MCF 10A (cell line): ENCODE measurements at regions of chr13 and their contacts with region 1.

Region 1: GRCh38 chr13:51645154-51645650 is 60.9 kb downstream of the WDFY2 start:
- DNase-seq: peak; percentile 78
- H3K4me3 Mint-ChIP-seq: peak overlapping the region; percentile 52
- H3K27ac Mint-ChIP-seq: peak overlapping the region; percentile 95
- H3K4me1 Mint-ChIP-seq: peaks cover 39% of the 10 kb centered on the region
- H3K27me3 Mint-ChIP-seq: no peaks in the 10 kb centered on the region
- CTCF ChIP-seq: no peak

Region 2: DNA sequence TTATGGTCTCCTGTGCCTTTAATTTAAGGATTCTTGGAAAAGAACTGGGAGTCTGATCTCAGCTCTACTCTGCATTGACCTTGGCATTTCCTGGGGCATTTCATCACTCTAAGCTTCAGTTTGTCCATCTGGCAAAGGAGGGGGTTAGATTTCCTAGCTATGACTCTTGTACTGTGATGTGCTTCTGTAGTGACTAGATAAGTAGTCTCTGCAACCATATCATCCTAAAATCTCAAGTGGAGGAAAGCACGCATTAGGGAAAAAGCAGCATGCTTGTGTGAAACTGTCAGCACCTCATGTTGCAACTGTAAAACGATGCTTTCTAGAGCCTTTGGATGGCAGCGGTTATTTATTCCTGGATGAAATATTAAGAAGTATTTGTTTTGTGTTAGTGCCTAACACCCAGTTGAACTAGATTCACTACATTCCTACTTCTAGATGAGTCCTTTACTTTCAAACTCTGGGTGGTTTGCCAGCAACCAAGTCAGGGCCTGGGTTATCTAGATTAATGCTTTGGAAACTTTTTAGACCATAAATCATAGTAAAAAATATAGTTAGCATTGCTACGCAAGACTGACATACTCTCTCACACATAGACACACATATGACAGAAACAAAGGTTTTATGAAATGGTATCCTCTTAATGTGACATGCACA is 54.1 kb before region 1 on chr13:
- CTCF ChIA-PET with region 1: no interaction called
- POLR2A ChIA-PET with region 1: interaction called, 14 read pairs
- intact Hi-C with region 1: no loop called
- DNase-seq: peak; percentile 91
- H3K4me3 Mint-ChIP-seq: peak overlapping the region; percentile 61
- H3K27ac Mint-ChIP-seq: peak overlapping the region; percentile 77
- H3K4me1 Mint-ChIP-seq: peaks cover 59% of the 10 kb centered on the region
- H3K27me3 Mint-ChIP-seq: no peaks in the 10 kb centered on the region
- CTCF ChIP-seq: no peak

Region 3: GRCh38 chr13:51632591-51633362 is 12.4 kb before region 1 on chr13:
- CTCF ChIA-PET with region 1: no interaction called
- POLR2A ChIA-PET with region 1: interaction called, 37 read pairs
- intact Hi-C with region 1: no loop called
- DNase-seq: no peak
- H3K4me3 Mint-ChIP-seq: peak overlapping the region; percentile 66
- H3K27ac Mint-ChIP-seq: peak overlapping the region; percentile 97
- H3K4me1 Mint-ChIP-seq: peaks cover 50% of the 10 kb centered on the region
- H3K27me3 Mint-ChIP-seq: no peaks in the 10 kb centered on the region
- CTCF ChIP-seq: no peak

Region 4: GRCh38 chr13:51697181-51697580 is 52.0 kb after region 1 on chr13:
- CTCF ChIA-PET with region 1: no interaction called
- POLR2A ChIA-PET with region 1: interaction called, 24 read pairs
- intact Hi-C with region 1: no loop called
- DNase-seq: peak; percentile 51
- H3K4me3 Mint-ChIP-seq: no peak overlapping the region
- H3K27ac Mint-ChIP-seq: peak overlapping the region; percentile 69
- H3K4me1 Mint-ChIP-seq: peaks cover 18% of the 10 kb centered on the region
- H3K27me3 Mint-ChIP-seq: no peaks in the 10 kb centered on the region
- CTCF ChIP-seq: no peak

Region 5: DNA sequence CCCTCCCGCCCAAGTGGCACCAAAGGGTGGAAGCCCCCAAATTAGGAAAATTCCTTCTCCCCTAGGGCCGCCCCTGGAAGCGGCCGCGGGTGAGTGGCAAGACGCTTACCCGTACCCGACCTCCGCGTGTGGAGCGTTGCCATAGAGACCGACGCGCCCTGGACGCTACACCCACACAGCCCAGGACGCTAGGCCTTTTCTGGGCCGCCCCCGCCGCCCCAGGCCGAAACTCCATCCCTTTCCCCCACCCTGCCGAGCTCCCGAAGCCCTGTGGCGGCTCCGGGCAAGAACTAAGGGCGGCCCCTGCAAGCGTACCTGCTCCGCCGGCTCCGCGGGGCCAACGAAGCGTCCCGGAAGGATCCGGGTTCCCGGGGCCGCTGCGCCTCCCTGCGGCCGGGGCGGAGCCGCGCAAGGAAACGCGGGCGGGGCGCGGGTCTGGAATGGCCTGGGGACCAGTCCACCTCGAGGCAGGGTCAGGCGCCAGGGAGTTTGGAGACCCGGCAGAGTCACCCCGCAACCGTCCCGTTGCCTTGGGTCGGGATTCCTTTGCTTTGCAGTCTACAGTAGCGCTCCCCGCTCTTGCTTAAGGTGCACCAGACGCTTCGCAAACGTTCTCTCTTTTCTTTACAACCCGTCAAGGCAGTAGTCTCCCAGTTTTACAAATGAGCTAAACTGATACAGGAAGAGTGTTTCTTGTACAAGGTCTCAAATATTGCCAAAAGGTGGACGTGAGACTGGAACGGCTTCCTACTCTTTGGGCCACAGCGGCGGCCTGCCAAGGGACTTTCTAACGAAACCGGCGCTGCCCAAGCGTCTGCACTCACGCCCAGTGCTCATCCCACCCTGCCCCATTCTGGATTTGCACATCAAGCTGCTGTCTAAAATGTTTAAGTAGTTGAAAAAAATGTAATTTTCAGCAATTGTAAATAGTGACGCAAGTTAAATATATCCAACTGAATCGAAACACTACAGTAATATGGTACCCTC is 483.8 kb after region 1 on chr13 and contains the start of gene NEK5:
- CTCF ChIA-PET with region 1: no interaction called
- POLR2A ChIA-PET with region 1: no interaction called
- intact Hi-C with region 1: no loop called
- DNase-seq: peak; percentile 56
- H3K4me3 Mint-ChIP-seq: peak within 1 kb of the TSS; percentile 78
- H3K27ac Mint-ChIP-seq: no peak within 1 kb of the TSS
- H3K4me1 Mint-ChIP-seq: peaks cover 5% of the 10 kb centered on the region
- H3K27me3 Mint-ChIP-seq: no peaks in the 10 kb centered on the region
- CTCF ChIP-seq: peak; percentile 79
- total RNA-seq, gene NEK5: 0.21 and 0.61 TPM in 2 replicates